ENCODE measurements at regions of chr10 and their contacts with region 1.

Region 1: GRCh38 chr10:113390896-113391295 is 162.0 kb upstream of the HABP2 start:
- DNase-seq: no peak
- H3K4me3 ChIP-seq: no peak overlapping the region
- H3K27ac ChIP-seq: no peak overlapping the region
- H3K4me1 ChIP-seq: no peaks in the 10 kb centered on the region
- H3K27me3 ChIP-seq: no peaks in the 10 kb centered on the region
- CTCF ChIP-seq: no peak
- POLR2A ChIP-seq: no peak

Region 2: DNA sequence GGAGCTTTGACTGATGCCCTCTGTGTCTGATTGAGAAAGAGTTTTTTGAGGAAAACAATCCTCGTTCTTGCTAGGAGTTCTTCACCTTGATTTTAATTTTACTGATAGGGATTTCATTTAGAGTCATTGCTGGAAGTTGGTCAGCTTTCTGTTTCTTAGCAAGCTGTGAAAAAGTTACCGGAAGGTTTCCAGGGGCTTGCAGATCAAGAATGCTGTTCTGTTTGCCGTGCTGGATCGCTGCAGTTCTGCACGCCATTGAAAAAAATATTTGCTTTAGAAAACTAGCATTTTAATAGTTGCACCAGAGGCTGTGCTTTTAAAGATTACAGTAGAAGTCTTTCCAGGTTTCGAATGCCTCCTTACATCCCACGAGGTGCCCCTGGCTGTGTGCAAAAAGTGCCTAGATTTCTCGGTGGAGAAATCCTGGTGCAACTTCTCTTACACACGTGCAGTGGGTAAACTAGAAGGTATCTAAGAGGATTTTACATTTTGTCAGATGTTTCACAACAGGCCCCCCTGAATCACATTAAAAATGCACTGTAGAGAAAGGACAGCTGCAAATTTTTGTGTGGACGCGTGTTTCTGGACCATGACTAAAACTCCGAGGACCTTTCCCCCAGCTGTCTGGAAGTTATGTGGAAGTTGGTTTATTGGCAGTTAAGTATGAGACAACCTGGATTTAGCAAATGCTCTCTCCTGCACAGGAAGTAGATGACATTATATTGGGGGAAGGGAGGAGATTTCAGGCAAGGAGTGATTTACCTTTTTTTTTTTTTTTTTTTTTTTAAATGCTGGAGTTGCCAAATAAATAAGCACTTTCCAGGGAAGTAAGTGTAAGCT is 435.1 kb before region 1 on chr10:
- intact Hi-C with region 1: loop called (anchors 5 kb)
- DNase-seq: no peak
- H3K4me3 ChIP-seq: peak overlapping the region; percentile 21 to 86 (median 79)
- H3K27ac ChIP-seq: peak overlapping the region; percentile 21 to 97
- H3K4me1 ChIP-seq: peaks cover 0 to 12% of the 10 kb centered on the region in 2 donors
- H3K27me3 ChIP-seq: no peaks in the 10 kb centered on the region
- CTCF ChIP-seq: no peak
- POLR2A ChIP-seq: no peak

Region 3: DNA sequence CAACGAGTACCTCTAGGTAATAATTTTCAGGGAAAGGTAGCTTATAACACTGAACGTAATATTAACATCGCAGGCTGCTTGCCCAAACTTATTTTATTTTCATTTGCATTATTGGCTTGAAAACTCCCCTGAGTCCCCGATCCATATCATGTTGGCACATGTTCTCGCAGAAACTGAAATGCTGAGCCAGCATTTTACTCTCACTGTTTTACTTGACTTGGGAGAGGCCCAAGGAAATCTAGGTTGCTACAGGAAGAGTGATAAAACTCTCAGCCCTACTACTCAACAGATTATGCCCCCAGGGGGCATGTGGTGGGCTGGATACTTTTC is 21.6 kb before region 1 on chr10:
- intact Hi-C with region 1: no loop called
- DNase-seq: no peak
- H3K4me3 ChIP-seq: no peak overlapping the region
- H3K27ac ChIP-seq: no peak overlapping the region
- H3K4me1 ChIP-seq: no peaks in the 10 kb centered on the region
- H3K27me3 ChIP-seq: no peaks in the 10 kb centered on the region
- CTCF ChIP-seq: no peak
- POLR2A ChIP-seq: no peak

Region 4: GRCh38 chr10:113808168-113808567 is 417.3 kb after region 1 on chr10:
- intact Hi-C with region 1: no loop called
- DNase-seq: no peak
- H3K4me3 ChIP-seq: no peak overlapping the region
- H3K27ac ChIP-seq: no peak overlapping the region
- H3K4me1 ChIP-seq: no peaks in the 10 kb centered on the region
- H3K27me3 ChIP-seq: no peaks in the 10 kb centered on the region
- CTCF ChIP-seq: no peak
- POLR2A ChIP-seq: no peak

Measured in breast epithelium (tissue), 4 donors.